ENCODE measurements at regions of chr11 and their contacts with region 1.

Region 1: GRCh38 chr11:64846998-64847666 is 2.7 kb upstream of the CDC42BPG start:
- DNase-seq: peak; percentile 83
- H3K4me3 Mint-ChIP-seq: no peak overlapping the region
- H3K27ac Mint-ChIP-seq: no peak overlapping the region
- H3K4me1 Mint-ChIP-seq: peaks cover 32% of the 10 kb centered on the region
- H3K27me3 Mint-ChIP-seq: peaks cover 2% of the 10 kb centered on the region

Region 2: GRCh38 chr11:64675450-64676260 is 171.5 kb before region 1 on chr11:
- intact Hi-C with region 1: no loop called
- DNase-seq: no peak
- H3K4me3 Mint-ChIP-seq: no peak overlapping the region
- H3K27ac Mint-ChIP-seq: no peak overlapping the region
- H3K4me1 Mint-ChIP-seq: no peaks in the 10 kb centered on the region
- H3K27me3 Mint-ChIP-seq: peaks cover 49% of the 10 kb centered on the region

Region 3: GRCh38 chr11:64734811-64735724 is 112.1 kb before region 1 on chr11:
- intact Hi-C with region 1: no loop called
- DNase-seq: no peak
- H3K4me3 Mint-ChIP-seq: no peak overlapping the region
- H3K27ac Mint-ChIP-seq: peak overlapping the region; percentile 1
- H3K4me1 Mint-ChIP-seq: peaks cover 7% of the 10 kb centered on the region
- H3K27me3 Mint-ChIP-seq: no peaks in the 10 kb centered on the region

Region 4: GRCh38 chr11:64787526-64788320 is 59.4 kb before region 1 on chr11:
- intact Hi-C with region 1: loop called (anchors 2 kb)
- DNase-seq: peak; percentile 36
- H3K4me3 Mint-ChIP-seq: no peak overlapping the region
- H3K27ac Mint-ChIP-seq: no peak overlapping the region
- H3K4me1 Mint-ChIP-seq: no peaks in the 10 kb centered on the region
- H3K27me3 Mint-ChIP-seq: no peaks in the 10 kb centered on the region

Region 5: GRCh38 chr11:64810271-64810890 is 36.8 kb before region 1 on chr11 and contains the start of gene MEN1:
- intact Hi-C with region 1: no loop called
- DNase-seq: peak; percentile 67
- H3K4me3 Mint-ChIP-seq: peak within 1 kb of the TSS; percentile 95
- H3K27ac Mint-ChIP-seq: peak within 1 kb of the TSS; percentile 89
- H3K4me1 Mint-ChIP-seq: peaks cover 22% of the 10 kb centered on the region
- H3K27me3 Mint-ChIP-seq: peaks cover 5% of the 10 kb centered on the region
- total RNA-seq, gene MEN1: 39.6 and 43.8 TPM in 2 replicates

Region 6: GRCh38 chr11:64878494-64879243 is 31.5 kb after region 1 on chr11 and contains the start of gene EHD1:
- intact Hi-C with region 1: loop called (anchors 1 kb)
- DNase-seq: peak; percentile 99
- H3K4me3 Mint-ChIP-seq: peak within 1 kb of the TSS; percentile 99
- H3K27ac Mint-ChIP-seq: peak within 1 kb of the TSS; percentile 83
- H3K4me1 Mint-ChIP-seq: peaks cover 64% of the 10 kb centered on the region
- H3K27me3 Mint-ChIP-seq: no peaks in the 10 kb centered on the region
- total RNA-seq, gene EHD1: 88.0 and 96.9 TPM in 2 replicates

Region 7: GRCh38 chr11:64894070-64894796 is 47.1 kb after region 1 on chr11:
- intact Hi-C with region 1: loop called (anchors 1 kb)
- DNase-seq: peak; percentile 80
- H3K4me3 Mint-ChIP-seq: no peak overlapping the region
- H3K27ac Mint-ChIP-seq: no peak overlapping the region
- H3K4me1 Mint-ChIP-seq: no peaks in the 10 kb centered on the region
- H3K27me3 Mint-ChIP-seq: no peaks in the 10 kb centered on the region

Region 8: DNA sequence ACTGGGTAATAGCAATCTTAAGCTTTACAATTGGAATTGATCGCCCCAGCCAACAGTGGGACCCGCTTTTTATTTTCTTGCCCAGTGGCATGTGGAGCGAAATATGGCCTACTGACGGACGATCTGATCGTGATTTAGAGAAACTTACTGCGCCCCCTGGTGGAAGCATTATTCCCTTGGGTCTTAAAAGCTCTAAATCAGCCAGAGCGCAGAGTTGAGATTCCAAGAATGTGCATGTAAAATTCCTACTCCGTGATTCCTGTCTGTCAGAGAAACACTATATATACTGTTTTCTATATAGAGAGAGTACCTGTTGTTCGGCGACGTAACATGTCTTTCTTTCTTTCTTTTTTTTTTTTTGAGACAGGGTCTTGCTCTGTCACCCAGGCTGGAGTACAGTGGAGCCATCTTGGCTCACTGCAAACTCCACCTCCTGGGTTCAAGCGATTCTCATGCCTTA is 482.8 kb after region 1 on chr11:
- intact Hi-C with region 1: loop called (anchors 10 kb)
- DNase-seq: peak; percentile 67
- H3K4me3 Mint-ChIP-seq: no peak overlapping the region
- H3K27ac Mint-ChIP-seq: no peak overlapping the region
- H3K4me1 Mint-ChIP-seq: peaks cover 16% of the 10 kb centered on the region
- H3K27me3 Mint-ChIP-seq: peaks cover 4% of the 10 kb centered on the region

Measured in activated T-helper 1 cell treated with anti-CD3 and anti-CD28 coated beads, Interleukin-12 subunit alpha, Interleukin-12 subunit beta, Interleukin-2, Interleukin-4 antibody, amounts not matched to agents 30 ng/mL and 10 ng/mL and 1 ng/mL, durations not matched to agents 14 hours and 24 hours and 36 hours (primary cell).